GM10248 (cell line): ENCODE measurements at regions of chr12 and their contacts with region 1.

Region 1: GRCh38 chr12:674272-674781 is 11.1 kb upstream of the NINJ2 start:
- DNase-seq: peak; percentile 66
- CTCF ChIP-seq: no peak

Region 2: DNA sequence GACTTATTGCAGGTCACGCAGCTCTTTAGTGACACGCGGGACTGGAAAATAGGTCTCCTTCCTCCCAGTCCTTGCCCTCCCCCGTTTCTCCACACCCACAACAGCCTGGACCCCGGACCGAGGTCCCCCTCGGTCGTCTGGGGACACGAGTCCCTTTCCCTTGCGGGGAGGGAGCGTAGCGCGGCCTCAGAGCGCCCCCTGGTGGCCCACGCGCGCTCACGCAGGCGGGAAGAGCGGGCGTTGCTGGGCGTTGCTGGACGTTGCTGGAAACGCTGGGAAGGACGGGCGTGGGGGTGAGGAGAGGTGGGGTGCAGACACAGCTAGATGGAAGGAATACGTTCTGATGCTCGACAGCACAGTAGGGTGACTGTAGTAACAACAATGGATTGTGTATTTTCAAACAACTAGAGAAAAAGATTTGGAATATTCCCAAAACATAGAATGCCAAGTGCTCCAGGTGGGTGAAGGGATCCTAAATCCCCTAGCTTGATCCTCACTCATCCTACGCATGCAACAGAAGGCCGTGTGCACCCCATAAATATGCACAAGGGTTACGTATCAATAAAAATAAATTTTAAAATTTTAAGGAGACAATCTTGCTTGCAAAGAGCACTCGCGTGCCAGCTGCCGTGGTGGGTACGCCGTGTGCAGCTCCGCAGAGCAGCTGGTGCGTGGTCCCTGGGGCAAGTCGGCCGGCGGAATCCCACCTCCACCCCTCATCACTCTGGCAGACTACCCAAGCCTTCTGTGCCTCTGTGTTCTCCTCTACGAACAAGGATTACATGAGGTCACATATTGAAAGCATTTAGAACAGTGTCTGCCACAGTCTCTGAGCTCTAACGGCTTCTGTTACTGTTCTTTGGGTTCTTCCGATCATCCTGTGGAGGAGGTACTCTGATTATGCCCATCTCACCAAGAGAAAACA is 127.1 kb before region 1 on chr12:
- CTCF ChIA-PET with region 1: no interaction called
- POLR2A ChIA-PET with region 1: no interaction called
- DNase-seq: peak; percentile 91
- CTCF ChIP-seq: peak; percentile 99

Region 3: GRCh38 chr12:662566-663292 is 11.6 kb before region 1 on chr12:
- CTCF ChIA-PET with region 1: interaction called, 28 read pairs
- POLR2A ChIA-PET with region 1: no interaction called
- DNase-seq: no peak
- CTCF ChIP-seq: no peak

Region 4: GRCh38 chr12:685388-685787 is 11.1 kb after region 1 on chr12:
- CTCF ChIA-PET with region 1: interaction called, 17 read pairs
- POLR2A ChIA-PET with region 1: interaction called, 3 read pairs
- DNase-seq: peak; percentile 66
- CTCF ChIP-seq: no peak